ENCODE measurements at regions of chr20 and their contacts with region 1.

Region 1: DNA sequence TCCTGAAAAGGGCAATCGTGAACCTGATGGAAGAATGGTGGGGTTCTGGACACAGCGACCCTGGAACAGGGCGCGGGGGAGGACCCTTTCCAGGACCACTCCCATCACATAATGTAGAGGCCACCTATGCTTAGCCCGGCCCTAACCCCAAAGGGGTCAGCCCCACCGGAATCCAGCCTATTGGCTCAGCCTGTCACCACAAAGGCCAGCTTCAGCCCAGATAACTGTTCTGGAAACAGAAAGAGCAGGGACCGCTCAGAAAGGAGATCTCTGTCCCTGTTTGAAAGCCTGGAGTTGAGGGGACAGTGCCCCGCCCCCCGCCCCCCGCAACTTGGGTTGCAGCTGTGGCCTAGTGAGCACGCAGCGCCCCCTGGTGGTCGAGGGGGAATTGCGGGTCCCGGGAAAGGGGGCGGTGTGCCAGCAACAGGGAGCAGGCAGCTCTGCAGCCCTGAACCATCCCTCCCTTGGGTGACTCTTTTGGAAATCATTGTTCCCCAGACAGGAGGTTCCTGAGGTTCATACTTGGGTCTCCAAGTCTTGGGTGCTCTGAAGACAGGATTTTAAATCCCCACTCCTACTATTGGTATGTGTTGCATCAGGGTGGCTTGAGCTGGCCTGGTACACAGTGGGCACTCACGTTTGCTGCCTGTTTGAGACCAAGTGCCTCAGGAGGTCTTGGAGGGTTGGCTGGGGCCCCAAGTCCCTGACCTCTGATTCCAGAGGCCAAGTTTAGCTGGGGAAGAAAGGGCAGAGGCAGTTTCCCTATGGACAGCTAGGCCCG is 1.5 kb downstream of the SIGLEC1 start:
- DNase-seq: peak; percentile 80
- H3K27ac ChIP-seq: no peak overlapping the region
- CTCF ChIP-seq: peak; percentile 98

Region 2: DNA sequence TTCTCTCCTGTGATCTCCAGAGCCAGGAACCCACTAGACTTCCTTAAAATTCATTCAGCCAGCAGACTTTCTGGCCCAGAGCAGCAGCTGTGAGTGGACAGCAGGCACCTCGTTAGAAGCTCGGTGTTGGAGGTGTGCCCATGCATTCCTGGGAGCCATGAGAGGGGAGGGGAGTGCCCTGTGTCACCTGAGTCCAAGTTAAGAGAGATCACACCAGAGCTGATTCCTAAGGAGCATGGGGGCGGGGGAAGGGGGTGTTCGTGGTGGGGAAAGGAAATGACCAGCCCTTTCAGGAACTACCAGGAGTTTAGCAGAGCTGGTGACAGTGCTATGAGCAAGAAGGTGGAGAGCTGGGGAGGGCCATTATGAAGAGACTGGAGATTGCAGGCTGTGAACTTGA is 94.6 kb before region 1 on chr20:
- CTCF ChIA-PET with region 1: no interaction called
- POLR2A ChIA-PET with region 1: no interaction called
- DNase-seq: no peak
- H3K27ac ChIP-seq: no peak overlapping the region
- CTCF ChIP-seq: no peak

Region 3: GRCh38 chr20:3672547-3673171 is 38.2 kb before region 1 on chr20:
- CTCF ChIA-PET with region 1: interaction called, 37 read pairs
- POLR2A ChIA-PET with region 1: no interaction called
- DNase-seq: no peak
- H3K27ac ChIP-seq: no peak overlapping the region
- CTCF ChIP-seq: no peak

Region 4: GRCh38 chr20:3679749-3680700 is 30.9 kb before region 1 on chr20:
- CTCF ChIA-PET with region 1: interaction called, 37 read pairs
- POLR2A ChIA-PET with region 1: no interaction called
- DNase-seq: no peak
- H3K27ac ChIP-seq: peak overlapping the region; percentile 14; the same call in 1 of the 2 replicates
- CTCF ChIP-seq: no peak

Region 5: GRCh38 chr20:3696200-3696599 is 14.7 kb before region 1 on chr20:
- CTCF ChIA-PET with region 1: interaction called, 12 read pairs
- POLR2A ChIA-PET with region 1: no interaction called
- DNase-seq: no peak
- H3K27ac ChIP-seq: no peak overlapping the region
- CTCF ChIP-seq: peak; percentile 36